K562 (cell line): ENCODE measurements at regions of chr4 and their contacts with region 1.

Region 1: GRCh38 chr4:55345980-55346850 is at the start of gene SRD5A3:
- DNase-seq: peak; percentile 89 to 93 (median 90)
- ATAC-seq: peak; percentile 94
- H3K4me3 ChIP-seq: peak within 1 kb of the TSS; percentile 62
- H3K27ac ChIP-seq: peak within 1 kb of the TSS; percentile 96
- H3K4me1 ChIP-seq: peaks cover 12 to 15% of the 10 kb centered on the region in 2 experiments
- H3K27me3 ChIP-seq: no peaks in the 10 kb centered on the region
- CTCF ChIP-seq: peak; percentile 81 to 91 (median 83)
- EP300 ChIP-seq: no peak; the same call in 1 of the 2 replicates
- POLR2A ChIP-seq: peak; percentile 88
- RAD21 ChIP-seq: peak; percentile 71 to 73
- polyA plus RNA-seq, gene SRD5A3: 2.5 to 5.3 TPM

Region 2: DNA sequence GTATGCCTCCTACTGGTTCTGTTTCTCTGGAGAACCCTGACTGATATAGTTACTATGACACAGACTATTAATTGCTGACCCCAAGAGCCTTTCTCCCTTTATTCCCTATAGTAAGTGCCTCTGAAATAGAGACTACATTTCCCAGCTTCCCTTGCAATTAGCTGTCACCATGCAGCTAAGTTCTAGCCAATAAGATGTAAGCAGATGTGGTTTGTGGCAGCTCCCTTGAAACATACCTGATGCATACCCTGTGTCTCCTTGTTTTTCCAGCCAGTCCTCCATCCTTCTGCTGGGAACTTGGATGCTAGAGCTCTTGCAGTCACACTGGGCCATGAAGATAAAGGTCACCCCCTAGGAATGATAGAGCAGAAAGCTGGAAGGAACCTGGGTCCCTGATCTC is 39.9 kb after region 1 on chr4:
- CTCF ChIA-PET with region 1: no interaction called
- POLR2A ChIA-PET with region 1: interaction called, 4 read pairs
- in situ Hi-C with region 1: no loop called
- intact Hi-C with region 1: loop called (anchors 2 kb)
- DNase-seq: peak; percentile 46 to 73 (median 60)
- ATAC-seq: peak; percentile 91
- H3K4me3 ChIP-seq: no peak overlapping the region
- H3K27ac ChIP-seq: peak overlapping the region; percentile 53
- H3K4me1 ChIP-seq: peaks cover 29 to 42% of the 10 kb centered on the region in 2 experiments
- H3K27me3 ChIP-seq: no peaks in the 10 kb centered on the region
- CTCF ChIP-seq: no peak
- EP300 ChIP-seq: no peak
- POLR2A ChIP-seq: no peak
- RAD21 ChIP-seq: no peak

Region 3: DNA sequence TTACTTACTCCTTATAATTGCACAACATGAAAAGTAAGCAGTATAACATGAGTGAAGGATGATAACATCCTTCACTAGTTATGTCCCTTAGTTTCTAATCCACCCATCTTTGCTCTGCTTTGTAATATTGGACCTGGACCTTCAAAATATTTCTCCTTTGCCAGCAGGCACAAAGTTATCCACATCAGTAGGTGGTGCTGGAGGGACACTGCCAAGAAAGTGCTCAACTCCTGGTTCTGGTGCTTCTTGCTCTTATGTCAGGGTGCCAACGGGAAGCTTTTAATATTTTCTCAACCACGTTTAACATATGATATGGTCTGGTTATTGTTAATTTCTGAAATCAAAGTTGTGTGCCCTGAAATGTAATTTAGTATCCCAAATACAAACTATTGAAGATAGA is 98.6 kb after region 1 on chr4:
- CTCF ChIA-PET with region 1: no interaction called
- POLR2A ChIA-PET with region 1: interaction called, 5 read pairs
- in situ Hi-C with region 1: no loop called
- intact Hi-C with region 1: loop called (anchors 10 kb)
- DNase-seq: peak in 2 of 4 experiments; percentile 15 to 22
- ATAC-seq: peak; percentile 52; the same call in 2 of the 3 replicates
- H3K4me3 ChIP-seq: no peak overlapping the region
- H3K27ac ChIP-seq: no peak overlapping the region
- H3K4me1 ChIP-seq: no peaks in the 10 kb centered on the region
- H3K27me3 ChIP-seq: no peaks in the 10 kb centered on the region
- CTCF ChIP-seq: peak; percentile 37 to 58 (median 38); a peak in 5 of 6 replicates
- EP300 ChIP-seq: no peak
- POLR2A ChIP-seq: no peak
- RAD21 ChIP-seq: peak; percentile 45 to 60

Region 4: DNA sequence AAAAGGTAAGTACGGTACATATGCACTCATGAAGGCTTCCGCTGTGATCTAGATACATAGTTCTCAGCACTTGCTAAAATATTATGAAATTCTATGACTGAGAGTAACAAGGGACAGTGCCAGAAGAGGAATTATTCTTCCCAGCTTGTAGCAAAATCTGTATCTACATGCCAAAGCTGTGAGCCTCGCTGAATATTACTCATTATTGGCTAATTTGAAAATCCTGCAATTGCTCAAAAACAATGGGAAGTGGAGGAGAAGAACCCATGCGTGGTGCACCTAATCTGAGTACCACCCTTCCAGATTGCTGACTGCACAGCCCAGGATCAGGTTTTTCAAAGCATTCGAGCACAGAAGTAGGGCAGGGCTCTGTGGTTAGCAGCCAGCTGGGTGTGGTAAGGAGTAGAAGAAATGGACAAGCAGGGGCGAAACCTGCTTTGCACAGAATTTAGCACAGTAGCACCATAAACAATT is 263.2 kb after region 1 on chr4:
- CTCF ChIA-PET with region 1: no interaction called
- POLR2A ChIA-PET with region 1: no interaction called
- in situ Hi-C with region 1: no loop called
- intact Hi-C with region 1: no loop called
- DNase-seq: no peak
- ATAC-seq: no peak
- H3K4me3 ChIP-seq: no peak overlapping the region
- H3K27ac ChIP-seq: no peak overlapping the region
- H3K4me1 ChIP-seq: no peaks in the 10 kb centered on the region; a peak in 2 of 5 replicates
- H3K27me3 ChIP-seq: no peaks in the 10 kb centered on the region
- CTCF ChIP-seq: no peak
- EP300 ChIP-seq: no peak
- POLR2A ChIP-seq: 0 out of 2 replicates have a peak, but pooled peaks have one; percentile 20
- RAD21 ChIP-seq: no peak

Region 5: DNA sequence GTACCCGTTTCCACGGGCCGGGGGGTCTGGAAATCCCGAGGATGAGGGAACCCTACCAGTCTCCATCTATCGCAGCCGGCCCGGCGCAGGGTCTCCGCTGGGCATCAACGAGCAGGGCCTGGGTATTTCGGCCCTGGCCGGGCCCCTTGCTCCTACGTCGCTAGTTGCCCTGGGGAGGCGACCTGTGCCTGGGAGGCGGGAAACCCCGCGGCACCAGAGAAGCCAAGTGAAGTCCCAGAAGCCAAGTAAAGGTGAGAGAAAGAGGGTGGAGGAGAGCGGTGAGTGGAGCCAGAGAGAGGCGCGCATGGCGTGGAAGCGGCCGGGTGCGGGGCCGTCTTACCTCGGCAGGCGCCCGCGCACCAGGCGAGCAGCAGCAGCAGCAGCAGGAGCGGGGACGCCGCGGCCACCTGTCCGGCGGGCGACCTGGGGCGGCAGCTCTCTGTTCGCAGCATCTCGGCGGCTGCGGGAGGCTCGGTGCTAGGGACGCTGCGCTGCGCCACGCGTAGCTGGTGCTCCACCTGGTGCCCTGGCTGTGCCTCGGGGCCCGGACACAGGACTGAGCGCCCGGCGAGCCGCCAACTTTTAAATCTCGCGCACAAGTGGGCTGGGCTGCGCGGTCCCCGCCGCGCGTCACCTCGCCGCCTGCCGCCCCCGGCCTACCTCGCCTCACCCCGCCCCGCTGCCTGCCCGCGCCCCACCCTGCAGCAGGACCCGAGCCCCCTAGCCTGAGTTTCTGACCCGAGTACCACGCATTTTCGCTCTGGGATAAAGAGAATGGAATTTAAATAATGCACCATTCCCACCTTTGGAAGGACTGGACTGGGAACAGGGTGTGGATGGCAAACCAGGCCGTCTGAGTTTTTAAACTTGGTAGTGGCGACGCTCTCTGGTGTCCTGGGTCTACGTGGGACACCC is 289.8 kb after region 1 on chr4 and contains the start of gene NMU:
- CTCF ChIA-PET with region 1: no interaction called
- POLR2A ChIA-PET with region 1: no interaction called
- in situ Hi-C with region 1: no loop called
- intact Hi-C with region 1: loop called (anchors 10 kb)
- DNase-seq: peak; percentile 63 to 89 (median 72)
- ATAC-seq: peak; percentile 80
- H3K4me3 ChIP-seq: peak within 1 kb of the TSS; percentile 90
- H3K27ac ChIP-seq: peak within 1 kb of the TSS; percentile 96
- H3K4me1 ChIP-seq: peaks cover 12 to 20% of the 10 kb centered on the region in 2 experiments
- H3K27me3 ChIP-seq: no peaks in the 10 kb centered on the region
- CTCF ChIP-seq: peak in 2 of 3 experiments; percentile 48 to 56; a peak in 3 of 6 replicates
- EP300 ChIP-seq: no peak
- POLR2A ChIP-seq: peak; percentile 76
- RAD21 ChIP-seq: peak; percentile 17 to 43; a peak in 3 of 4 replicates
- polyA plus RNA-seq, gene NMU: 73.8 to 122 TPM

Region 6: DNA sequence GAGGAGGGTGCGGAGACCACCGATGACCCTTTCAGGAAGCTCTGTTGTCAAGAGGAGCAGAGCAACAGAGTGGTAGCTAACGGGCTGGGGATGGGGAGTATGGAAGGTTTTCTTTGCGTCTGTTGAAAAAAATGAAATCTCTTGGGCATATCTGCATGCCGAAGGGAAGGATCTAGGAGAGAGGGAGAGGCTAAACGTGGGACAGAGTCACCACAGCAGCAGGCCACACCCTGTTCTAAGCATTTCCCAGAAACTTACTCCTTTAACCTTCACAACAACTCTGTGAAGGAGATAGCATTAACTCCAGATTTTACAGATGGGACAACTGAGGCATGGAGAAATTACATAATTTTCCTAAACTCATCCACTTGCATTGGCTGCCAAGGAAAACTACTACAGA is 401.6 kb after region 1 on chr4:
- CTCF ChIA-PET with region 1: no interaction called
- POLR2A ChIA-PET with region 1: no interaction called
- in situ Hi-C with region 1: no loop called
- intact Hi-C with region 1: no loop called
- DNase-seq: no peak
- ATAC-seq: peak; percentile 21; the same call in 1 of the 3 replicates
- H3K4me3 ChIP-seq: no peak overlapping the region
- H3K27ac ChIP-seq: no peak overlapping the region
- H3K4me1 ChIP-seq: peaks cover 7 to 10% of the 10 kb centered on the region in 2 experiments; a peak in 4 of 5 replicates
- H3K27me3 ChIP-seq: no peaks in the 10 kb centered on the region
- CTCF ChIP-seq: no peak
- EP300 ChIP-seq: no peak
- POLR2A ChIP-seq: no peak
- RAD21 ChIP-seq: no peak